Right lobe of liver (tissue), 6 donors: ENCODE measurements at regions of chr18 and their contacts with region 1.

Region 1: DNA sequence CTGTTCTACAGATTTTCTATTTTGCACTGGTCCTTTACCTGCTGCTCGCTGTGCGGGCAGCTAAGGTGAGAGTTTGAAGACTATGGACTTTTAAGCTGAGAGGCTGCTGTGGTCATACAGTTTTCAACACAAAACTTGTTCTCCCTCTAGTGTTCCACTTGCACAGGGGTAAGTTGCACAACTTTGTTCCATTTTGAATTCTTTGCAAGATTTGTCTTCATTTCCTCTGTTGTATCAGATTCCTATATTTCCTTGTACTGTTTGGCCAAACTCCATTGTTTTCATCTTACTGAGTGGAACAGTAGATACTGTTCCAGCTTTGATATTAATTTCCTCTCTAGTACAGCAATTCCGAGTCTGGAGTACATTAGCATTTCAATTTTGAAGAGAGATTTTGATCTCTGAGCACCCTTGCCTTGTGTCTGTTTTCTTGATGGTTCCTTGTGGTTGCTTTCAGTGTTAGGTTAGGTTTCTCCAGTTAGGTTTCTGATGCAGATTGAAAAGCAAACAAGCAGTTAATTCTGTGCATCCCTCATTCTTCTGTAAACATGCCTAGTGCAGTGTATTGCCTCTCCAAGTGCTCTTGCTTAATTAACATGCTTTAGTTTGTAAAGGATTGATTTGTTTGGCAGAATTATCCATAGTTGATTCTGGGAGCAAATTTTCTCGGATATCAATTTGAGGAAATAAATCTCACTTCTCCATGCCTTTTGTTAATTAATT is 188.8 kb downstream of the PTPRM start:
- DNase-seq: no peak
- ATAC-seq: peak; percentile 65 to 83 (median 75)
- H3K4me3 ChIP-seq: no peak overlapping the region
- H3K27ac ChIP-seq: peak overlapping the region in 1 of 3 donors; percentile 61
- H3K4me1 ChIP-seq: peaks cover 0 to 18% (median 9%) of the 10 kb centered on the region in 4 donors
- H3K27me3 ChIP-seq: no peaks in the 10 kb centered on the region
- CTCF ChIP-seq: peak; percentile 29 to 54 (median 43)
- POLR2A ChIP-seq: no peak

Region 2: DNA sequence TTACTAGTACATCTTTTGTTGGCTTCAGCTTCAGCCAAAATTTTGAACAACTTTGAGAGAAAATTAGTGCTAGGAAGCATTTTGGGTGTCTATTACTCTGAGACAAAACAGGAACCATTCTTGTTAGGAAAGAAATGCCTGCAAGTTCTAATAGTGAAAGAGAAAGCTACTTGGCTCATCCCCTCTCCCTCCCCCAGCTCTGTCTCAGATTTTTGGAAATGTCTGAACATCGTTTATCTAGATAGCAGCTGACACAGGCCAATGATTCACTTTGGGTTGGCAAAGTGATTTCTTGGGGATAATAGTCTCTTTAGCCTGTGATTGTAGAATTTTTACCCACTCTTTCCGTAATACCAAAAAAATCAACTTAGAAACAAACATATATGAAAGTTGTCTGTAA is 231.1 kb before region 1 on chr18:
- intact Hi-C with region 1: no loop called
- DNase-seq: no peak
- ATAC-seq: peak in 2 of 4 donors; percentile 16 to 53
- H3K4me3 ChIP-seq: no peak overlapping the region
- H3K27ac ChIP-seq: no peak overlapping the region
- H3K4me1 ChIP-seq: no peaks in the 10 kb centered on the region
- H3K27me3 ChIP-seq: no peaks in the 10 kb centered on the region
- CTCF ChIP-seq: no peak
- POLR2A ChIP-seq: no peak

Region 3: GRCh38 chr18:7566567-7567473 is 189.1 kb before region 1 on chr18 and contains the start of gene PTPRM:
- intact Hi-C with region 1: loop called in 1 of 2 experiments (anchors 10 kb)
- DNase-seq: peak; percentile 88 to 91 (median 89)
- ATAC-seq: peak; percentile 87 to 92 (median 88)
- H3K4me3 ChIP-seq: peak within 1 kb of the TSS; percentile 76 to 86 (median 81)
- H3K27ac ChIP-seq: peak within 1 kb of the TSS; percentile 92 to 96 (median 94)
- H3K4me1 ChIP-seq: peaks cover 0 to 5% (median 2%) of the 10 kb centered on the region in 4 donors
- H3K27me3 ChIP-seq: no peaks in the 10 kb centered on the region
- CTCF ChIP-seq: peak in 2 of 4 donors; percentile 87 to 90
- POLR2A ChIP-seq: peak; percentile 92
- total RNA-seq, gene PTPRM: 15.1 to 45.7 (median 26.5) TPM

Region 4: DNA sequence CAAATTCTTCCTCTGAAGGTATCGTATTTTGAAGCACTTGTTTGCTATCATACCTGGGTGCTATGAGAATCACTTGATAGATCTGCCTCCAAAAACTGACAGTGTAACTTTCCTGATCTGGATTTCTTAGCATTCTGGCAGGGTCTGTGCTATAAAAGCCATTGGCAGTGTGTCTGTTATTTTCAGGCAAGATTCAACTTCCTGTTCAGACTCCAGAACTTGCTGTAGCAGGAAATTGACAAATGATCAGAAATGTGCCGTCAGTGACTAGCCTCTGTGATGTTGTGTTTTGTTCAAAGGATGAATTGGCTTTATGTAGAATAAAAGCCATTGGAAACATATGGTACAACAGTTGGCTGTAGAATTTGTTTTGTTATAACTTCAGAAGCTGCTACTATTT is 84.5 kb after region 1 on chr18:
- intact Hi-C with region 1: no loop called
- DNase-seq: no peak
- ATAC-seq: peak in 1 of 4 donors; percentile 30
- H3K4me3 ChIP-seq: no peak overlapping the region
- H3K27ac ChIP-seq: no peak overlapping the region
- H3K4me1 ChIP-seq: no peaks in the 10 kb centered on the region
- H3K27me3 ChIP-seq: no peaks in the 10 kb centered on the region
- CTCF ChIP-seq: no peak
- POLR2A ChIP-seq: no peak